ENCODE measurements at regions of chr12 and their contacts with region 1.

Region 1: DNA sequence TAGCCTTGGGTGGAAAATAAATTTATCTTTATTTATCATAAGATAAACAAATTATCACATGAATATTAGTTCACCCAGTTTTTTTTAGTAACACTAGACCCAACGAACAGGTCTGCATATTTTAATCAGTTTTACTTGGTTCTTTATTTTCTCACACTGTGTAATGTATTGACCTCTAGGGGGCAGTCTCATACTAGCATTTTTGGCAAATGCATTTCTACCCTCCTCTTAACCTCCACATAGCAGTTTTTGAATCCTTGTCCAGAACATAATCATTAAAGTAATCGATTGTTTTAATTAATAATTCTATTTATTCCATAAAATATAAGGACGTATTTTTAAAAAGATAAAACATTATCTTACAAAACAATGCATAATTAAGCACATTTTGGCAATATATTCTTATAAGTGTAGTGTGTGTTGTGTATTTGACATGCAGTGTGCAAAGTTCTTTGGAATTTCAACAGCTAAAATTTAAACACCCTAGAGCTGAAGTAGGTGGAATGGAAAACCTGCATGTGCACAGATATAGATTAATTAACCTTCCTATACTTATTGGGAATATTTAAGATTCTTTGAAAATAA is 31.6 kb upstream of the PTPRQ start:
- DNase-seq: peak; percentile 23
- H3K4me3 Mint-ChIP-seq: no peak overlapping the region
- H3K27ac Mint-ChIP-seq: no peak overlapping the region
- H3K4me1 Mint-ChIP-seq: no peaks in the 10 kb centered on the region
- H3K27me3 Mint-ChIP-seq: no peaks in the 10 kb centered on the region
- CTCF ChIP-seq: peak; percentile 63

Region 2: DNA sequence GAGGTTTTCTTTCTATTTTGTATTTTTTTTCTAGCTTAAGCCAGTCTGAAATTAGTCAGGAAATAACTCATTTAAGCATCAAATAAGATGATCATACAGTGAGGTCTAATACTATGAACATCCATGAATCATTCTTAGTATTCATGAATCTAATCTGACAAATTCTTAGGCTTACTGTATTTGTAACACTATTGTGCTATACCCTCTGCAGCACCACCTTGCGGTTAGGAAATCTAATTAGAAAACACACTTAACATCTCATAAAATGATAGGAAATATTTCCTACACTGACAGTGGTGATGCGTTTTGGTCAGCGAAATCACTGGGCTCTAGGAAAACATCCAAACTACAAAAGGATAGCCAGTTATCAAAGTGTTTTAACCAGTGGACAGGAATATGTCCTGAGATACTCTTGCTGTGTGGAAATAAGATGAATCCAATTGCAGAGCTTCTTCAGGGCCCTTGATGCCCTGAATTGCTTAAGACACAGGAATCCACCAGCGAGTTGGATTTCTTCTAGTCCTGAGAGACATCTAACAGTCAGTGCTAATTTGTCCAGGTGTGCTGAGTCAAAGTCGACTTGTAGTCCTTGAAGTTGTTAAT is 185.6 kb after region 1 on chr12:
- CTCF ChIA-PET with region 1: interaction called, 3 read pairs
- intact Hi-C with region 1: loop called (anchors 2 kb)
- DNase-seq: peak; percentile 56
- H3K4me3 Mint-ChIP-seq: no peak overlapping the region
- H3K27ac Mint-ChIP-seq: no peak overlapping the region
- H3K4me1 Mint-ChIP-seq: no peaks in the 10 kb centered on the region
- H3K27me3 Mint-ChIP-seq: no peaks in the 10 kb centered on the region
- CTCF ChIP-seq: peak; percentile 26

Region 3: DNA sequence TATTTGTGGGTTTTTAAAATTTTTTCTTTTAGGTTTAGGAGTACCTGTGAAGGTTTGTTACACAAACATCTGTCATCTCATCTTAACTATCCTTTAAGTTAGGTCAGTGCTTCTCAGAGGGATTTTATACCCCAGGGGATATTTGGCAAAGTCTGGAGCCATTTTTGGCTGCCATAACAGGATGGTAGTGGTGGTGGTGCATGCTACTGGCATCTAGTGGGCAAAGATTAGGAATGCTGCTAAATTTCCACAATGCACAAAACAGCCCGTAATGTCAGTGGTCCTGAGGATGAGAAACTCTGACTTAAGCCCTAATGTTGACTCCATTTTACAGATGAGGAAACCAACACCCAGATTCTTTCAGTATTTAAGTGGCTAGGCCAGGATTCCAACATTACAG is 209.8 kb after region 1 on chr12:
- CTCF ChIA-PET with region 1: no interaction called
- intact Hi-C with region 1: loop called (anchors 5 kb)
- DNase-seq: peak; percentile 14
- H3K4me3 Mint-ChIP-seq: no peak overlapping the region
- H3K27ac Mint-ChIP-seq: no peak overlapping the region
- H3K4me1 Mint-ChIP-seq: no peaks in the 10 kb centered on the region
- H3K27me3 Mint-ChIP-seq: no peaks in the 10 kb centered on the region
- CTCF ChIP-seq: peak; percentile 26

Region 4: GRCh38 chr12:80752464-80752863 is 340.0 kb after region 1 on chr12:
- CTCF ChIA-PET with region 1: no interaction called
- intact Hi-C with region 1: no loop called
- DNase-seq: no peak
- H3K4me3 Mint-ChIP-seq: no peak overlapping the region
- H3K27ac Mint-ChIP-seq: no peak overlapping the region
- H3K4me1 Mint-ChIP-seq: no peaks in the 10 kb centered on the region
- H3K27me3 Mint-ChIP-seq: no peaks in the 10 kb centered on the region
- CTCF ChIP-seq: no peak

Region 5: GRCh38 chr12:80763874-80764273 is 351.4 kb after region 1 on chr12:
- CTCF ChIA-PET with region 1: no interaction called
- intact Hi-C with region 1: loop called (anchors 1 kb)
- DNase-seq: peak; percentile 39
- H3K4me3 Mint-ChIP-seq: no peak overlapping the region
- H3K27ac Mint-ChIP-seq: no peak overlapping the region
- H3K4me1 Mint-ChIP-seq: no peaks in the 10 kb centered on the region
- H3K27me3 Mint-ChIP-seq: no peaks in the 10 kb centered on the region
- CTCF ChIP-seq: peak; percentile 36

Region 6: GRCh38 chr12:80946594-80946993 is 534.1 kb after region 1 on chr12:
- CTCF ChIA-PET with region 1: no interaction called
- intact Hi-C with region 1: loop called (anchors 5 kb)
- DNase-seq: no peak
- H3K4me3 Mint-ChIP-seq: no peak overlapping the region
- H3K27ac Mint-ChIP-seq: no peak overlapping the region
- H3K4me1 Mint-ChIP-seq: peaks cover 7% of the 10 kb centered on the region
- H3K27me3 Mint-ChIP-seq: no peaks in the 10 kb centered on the region
- CTCF ChIP-seq: no peak

Region 7: DNA sequence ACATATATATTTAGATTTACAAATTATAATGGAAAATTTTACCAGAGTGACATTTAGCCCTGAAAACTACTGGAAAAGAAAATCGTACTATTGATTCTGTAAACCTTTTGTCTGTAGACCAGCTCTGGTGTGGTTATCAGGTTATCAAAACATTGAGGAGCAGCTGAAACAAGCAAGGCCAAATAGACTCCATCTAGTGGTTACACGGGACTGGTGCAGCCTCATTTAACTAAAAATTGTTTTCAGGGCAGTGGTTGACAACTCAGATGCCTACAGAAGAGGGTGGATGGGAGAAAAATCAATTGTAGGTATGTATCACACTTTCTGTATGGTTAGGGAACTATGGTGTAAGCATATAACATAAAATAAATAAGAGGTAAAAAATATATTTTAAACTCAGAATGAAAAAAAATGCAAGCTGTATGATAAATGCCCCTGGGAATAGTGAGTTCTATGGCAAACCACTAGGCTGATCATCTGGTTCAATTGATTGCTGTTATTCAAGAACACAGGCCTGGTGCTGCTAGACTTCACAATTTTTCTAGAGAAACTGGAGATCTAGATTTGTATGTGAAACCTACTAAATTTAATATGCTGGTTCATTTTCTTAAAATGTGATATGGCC is 716.6 kb after region 1 on chr12:
- CTCF ChIA-PET with region 1: no interaction called
- intact Hi-C with region 1: loop called (anchors 1 kb)
- DNase-seq: peak; percentile 34
- H3K4me3 Mint-ChIP-seq: no peak overlapping the region
- H3K27ac Mint-ChIP-seq: no peak overlapping the region
- H3K4me1 Mint-ChIP-seq: no peaks in the 10 kb centered on the region
- H3K27me3 Mint-ChIP-seq: no peaks in the 10 kb centered on the region
- CTCF ChIP-seq: peak; percentile 52

Region 8: DNA sequence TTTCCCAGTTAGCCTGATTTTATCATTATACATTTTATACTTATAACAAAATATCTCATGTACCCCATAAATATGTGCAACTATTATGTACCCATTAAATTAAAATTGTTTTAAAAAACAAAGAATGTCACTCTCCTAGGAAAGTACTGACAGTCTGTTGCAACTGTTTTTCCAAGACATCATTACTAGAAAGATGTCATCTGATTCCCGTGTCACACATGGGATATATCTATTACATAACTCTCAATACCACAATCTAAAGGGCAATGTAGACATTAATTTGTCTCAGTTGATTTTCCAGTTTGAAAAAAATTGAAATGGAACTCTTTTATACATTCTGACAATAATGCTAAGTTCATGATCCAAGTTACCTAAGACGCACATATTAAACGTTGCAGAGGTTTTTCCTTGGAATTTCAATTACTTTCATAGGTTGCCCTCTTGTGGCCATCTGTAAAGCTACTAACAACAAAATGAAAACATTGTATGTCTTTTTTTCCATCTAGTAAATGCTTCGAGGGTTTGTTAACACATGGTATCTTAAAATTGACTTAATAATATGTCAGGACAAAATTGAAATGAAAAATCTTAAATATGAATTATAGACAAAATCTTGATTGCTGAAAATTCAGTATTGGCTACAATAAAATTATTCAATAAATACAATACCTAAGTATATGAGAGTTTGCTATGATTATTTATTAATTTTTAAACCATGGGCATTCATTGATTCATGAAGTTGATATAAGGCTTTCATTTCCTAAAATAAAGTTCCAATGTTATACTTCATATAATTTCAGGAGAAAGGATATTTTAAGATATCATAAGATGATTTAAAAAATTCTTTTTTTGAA is 1215.1 kb after region 1 on chr12:
- CTCF ChIA-PET with region 1: no interaction called
- intact Hi-C with region 1: loop called (anchors 10 kb)
- DNase-seq: peak; percentile 41
- H3K4me3 Mint-ChIP-seq: no peak overlapping the region
- H3K27ac Mint-ChIP-seq: no peak overlapping the region
- H3K4me1 Mint-ChIP-seq: no peaks in the 10 kb centered on the region
- H3K27me3 Mint-ChIP-seq: no peaks in the 10 kb centered on the region
- CTCF ChIP-seq: no peak